Left cardiac atrium (tissue), 4 donors: ENCODE measurements at regions of chr12 and their contacts with region 1.

Region 1: GRCh38 chr12:93174048-93174447 is 203.7 kb upstream of the NUDT4 start:
- DNase-seq: no peak
- ATAC-seq: peak; percentile 54 to 78

Region 2: DNA sequence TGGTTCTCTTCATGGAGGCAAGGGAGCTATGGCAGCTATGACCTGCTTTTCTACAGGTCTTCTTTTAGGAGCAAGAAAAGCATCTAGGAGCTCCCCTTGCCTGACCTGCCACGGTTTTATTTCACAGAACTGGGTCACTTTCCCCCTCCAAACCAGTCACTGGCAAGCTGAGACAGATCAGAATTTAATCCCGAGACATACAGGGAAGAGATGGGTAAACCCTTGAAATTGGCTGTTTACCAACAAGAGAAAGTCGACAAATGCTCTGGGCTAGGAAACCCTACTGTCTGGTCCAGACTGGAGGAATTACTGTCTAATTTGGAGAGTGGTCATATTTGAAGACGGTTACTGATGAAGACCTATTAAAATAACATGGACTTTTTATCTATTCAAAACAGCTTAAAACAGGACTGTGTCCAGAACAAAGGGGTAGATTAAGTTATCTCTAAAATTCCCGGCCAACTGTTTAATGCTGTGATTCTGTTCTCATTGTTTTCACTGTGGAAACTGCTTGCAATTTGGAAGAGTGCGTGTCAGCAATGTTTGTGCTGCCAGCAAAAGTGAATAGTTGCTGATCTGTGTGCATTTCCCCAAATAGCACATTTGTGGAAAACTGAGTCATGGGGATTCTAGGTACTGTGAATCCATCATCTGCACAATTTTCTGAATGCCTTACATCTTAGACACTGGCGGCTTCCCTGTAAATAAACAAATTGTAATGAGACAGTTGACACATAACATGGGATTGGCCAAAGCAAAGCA is 171.6 kb before region 1 on chr12:
- intact Hi-C with region 1: no loop called
- DNase-seq: peak; percentile 46
- ATAC-seq: peak; percentile 61 to 81

Region 3: GRCh38 chr12:93134893-93135285 is 39.2 kb before region 1 on chr12:
- intact Hi-C with region 1: loop called in 1 of 2 experiments (anchors 5 kb)
- DNase-seq: no peak
- ATAC-seq: no peak